ENCODE measurements at regions of chrX and their contacts with region 1.

Region 1: GRCh38 chrX:1468250-1468772 is 15.6 kb upstream of the ASMTL start:
- DNase-seq: peak; percentile 83
- ATAC-seq: peak; percentile 77
- H3K4me3 ChIP-seq: no peak overlapping the region
- H3K27ac ChIP-seq: peak overlapping the region; percentile 82
- H3K4me1 ChIP-seq: peaks cover 43% of the 10 kb centered on the region
- H3K27me3 ChIP-seq: no peaks in the 10 kb centered on the region
- CTCF ChIP-seq: peak; percentile 24 to 60 (median 32); a peak in 4 of 6 replicates
- EP300 ChIP-seq: peak in 1 of 2 experiments; percentile 66; a peak in 2 of 4 replicates
- POLR2A ChIP-seq: 0 out of 2 replicates have a peak, but pooled peaks have one; percentile 40
- RAD21 ChIP-seq: peak; percentile 28

Region 2: GRCh38 chrX:1411291-1411720 is 57.0 kb before region 1 on chrX:
- CTCF ChIA-PET with region 1: no interaction called
- POLR2A ChIA-PET with region 1: no interaction called
- RAD21 ChIA-PET with region 1: no interaction called
- SMC1A ChIA-PET with region 1: no interaction called
- in situ Hi-C with region 1: no loop called
- intact Hi-C with region 1: no loop called
- DNase-seq: no peak
- ATAC-seq: no peak
- H3K4me3 ChIP-seq: no peak overlapping the region
- H3K27ac ChIP-seq: no peak overlapping the region
- H3K4me1 ChIP-seq: no peaks in the 10 kb centered on the region
- H3K27me3 ChIP-seq: no peaks in the 10 kb centered on the region
- CTCF ChIP-seq: no peak
- EP300 ChIP-seq: no peak
- POLR2A ChIP-seq: 0 out of 2 replicates have a peak, but pooled peaks have one; percentile 19
- RAD21 ChIP-seq: no peak

Region 3: GRCh38 chrX:1500701-1501624 is 32.7 kb after region 1 on chrX:
- CTCF ChIA-PET with region 1: no interaction called
- POLR2A ChIA-PET with region 1: no interaction called
- RAD21 ChIA-PET with region 1: no interaction called
- SMC1A ChIA-PET with region 1: no interaction called
- in situ Hi-C with region 1: no loop called
- intact Hi-C with region 1: loop called (anchors 5 kb)
- DNase-seq: peak; percentile 90
- ATAC-seq: peak; percentile 69
- H3K4me3 ChIP-seq: no peak overlapping the region
- H3K27ac ChIP-seq: peak overlapping the region; percentile 87
- H3K4me1 ChIP-seq: peaks cover 53% of the 10 kb centered on the region
- H3K27me3 ChIP-seq: no peaks in the 10 kb centered on the region
- CTCF ChIP-seq: no peak
- EP300 ChIP-seq: peak; percentile 49 to 71; a peak in 2 of 4 replicates
- POLR2A ChIP-seq: no peak
- RAD21 ChIP-seq: 0 out of 2 replicates have a peak, but pooled peaks have one; percentile 3

Region 4: GRCh38 chrX:1580735-1581531 is 112.6 kb after region 1 on chrX:
- CTCF ChIA-PET with region 1: no interaction called
- POLR2A ChIA-PET with region 1: no interaction called
- RAD21 ChIA-PET with region 1: no interaction called
- SMC1A ChIA-PET with region 1: no interaction called
- in situ Hi-C with region 1: no loop called
- intact Hi-C with region 1: loop called (anchors 5 kb)
- DNase-seq: no peak
- ATAC-seq: peak; percentile 67
- H3K4me3 ChIP-seq: no peak overlapping the region
- H3K27ac ChIP-seq: no peak overlapping the region
- H3K4me1 ChIP-seq: peaks cover 16% of the 10 kb centered on the region
- H3K27me3 ChIP-seq: no peaks in the 10 kb centered on the region
- CTCF ChIP-seq: peak; percentile 64 to 82 (median 81)
- EP300 ChIP-seq: no peak
- POLR2A ChIP-seq: no peak
- RAD21 ChIP-seq: peak; percentile 71